Activated CD8-positive, alpha-beta T cell treated with anti-CD3 and anti-CD28 coated beads, Interleukin-2, amount 10 ng/mL, durations not matched to agents 7 days and 5 days (primary cell): ENCODE measurements at regions of chr2 and their contacts with region 1.

Region 1: DNA sequence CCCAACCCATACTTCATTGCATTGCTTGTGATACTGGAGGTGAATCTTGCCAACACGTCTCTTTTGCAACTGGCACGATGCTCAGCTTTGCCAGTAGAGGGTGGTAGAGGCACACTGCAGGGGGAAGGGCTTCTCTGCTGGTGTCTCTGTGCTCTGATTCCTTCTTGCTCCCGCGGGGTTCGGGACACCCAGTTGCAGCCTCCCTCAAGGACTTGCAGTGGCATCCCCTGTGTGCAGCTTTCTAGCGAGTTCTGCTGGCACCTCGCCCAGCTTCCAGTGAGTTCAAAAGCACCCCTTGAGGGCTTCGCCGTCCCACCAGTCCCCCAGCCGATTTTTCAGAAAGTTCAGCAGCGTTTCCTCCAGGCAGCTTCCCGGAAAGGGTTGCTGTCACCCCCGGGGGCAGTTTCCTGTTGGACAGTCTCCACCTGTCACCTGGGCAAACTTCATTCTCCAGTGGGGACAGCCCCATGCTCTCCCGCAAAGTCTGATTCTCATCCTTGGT is 35.3 kb upstream of the EN1 start:
- DNase-seq: peak; percentile 71
- ATAC-seq: peak; percentile 75
- H3K4me3 Mint-ChIP-seq: peak overlapping the region; percentile 73
- H3K27ac Mint-ChIP-seq: peak overlapping the region; percentile 46
- H3K4me1 Mint-ChIP-seq: peaks cover 14% of the 10 kb centered on the region
- H3K27me3 Mint-ChIP-seq: peaks cover 6% of the 10 kb centered on the region

Region 2: DNA sequence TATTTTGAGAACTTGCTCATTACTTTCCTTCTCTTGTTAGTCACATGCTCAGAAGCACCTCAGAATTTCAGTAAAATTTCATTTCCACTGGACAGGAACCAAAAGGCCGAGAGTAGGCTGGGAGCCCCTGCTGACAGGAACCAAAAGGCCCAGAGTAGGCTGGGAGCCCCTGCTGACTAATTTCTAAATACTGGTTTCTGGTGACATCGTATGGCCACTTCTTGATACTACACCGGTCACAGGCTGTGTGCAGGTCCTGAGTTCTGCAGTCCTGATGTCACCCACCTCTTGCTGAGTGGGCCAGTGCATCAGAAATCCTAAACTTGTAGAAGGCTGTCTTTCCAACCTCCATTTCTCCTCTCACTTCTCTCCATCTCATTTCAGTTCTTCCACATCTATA is 17.7 kb before region 1 on chr2:
- CTCF ChIA-PET with region 1: interaction called, 23 read pairs
- POLR2A ChIA-PET with region 1: no interaction called
- DNase-seq: peak; percentile 36
- ATAC-seq: peak; percentile 81
- H3K4me3 Mint-ChIP-seq: no peak overlapping the region
- H3K27ac Mint-ChIP-seq: no peak overlapping the region
- H3K4me1 Mint-ChIP-seq: no peaks in the 10 kb centered on the region
- H3K27me3 Mint-ChIP-seq: peaks cover 29% of the 10 kb centered on the region

Region 3: DNA sequence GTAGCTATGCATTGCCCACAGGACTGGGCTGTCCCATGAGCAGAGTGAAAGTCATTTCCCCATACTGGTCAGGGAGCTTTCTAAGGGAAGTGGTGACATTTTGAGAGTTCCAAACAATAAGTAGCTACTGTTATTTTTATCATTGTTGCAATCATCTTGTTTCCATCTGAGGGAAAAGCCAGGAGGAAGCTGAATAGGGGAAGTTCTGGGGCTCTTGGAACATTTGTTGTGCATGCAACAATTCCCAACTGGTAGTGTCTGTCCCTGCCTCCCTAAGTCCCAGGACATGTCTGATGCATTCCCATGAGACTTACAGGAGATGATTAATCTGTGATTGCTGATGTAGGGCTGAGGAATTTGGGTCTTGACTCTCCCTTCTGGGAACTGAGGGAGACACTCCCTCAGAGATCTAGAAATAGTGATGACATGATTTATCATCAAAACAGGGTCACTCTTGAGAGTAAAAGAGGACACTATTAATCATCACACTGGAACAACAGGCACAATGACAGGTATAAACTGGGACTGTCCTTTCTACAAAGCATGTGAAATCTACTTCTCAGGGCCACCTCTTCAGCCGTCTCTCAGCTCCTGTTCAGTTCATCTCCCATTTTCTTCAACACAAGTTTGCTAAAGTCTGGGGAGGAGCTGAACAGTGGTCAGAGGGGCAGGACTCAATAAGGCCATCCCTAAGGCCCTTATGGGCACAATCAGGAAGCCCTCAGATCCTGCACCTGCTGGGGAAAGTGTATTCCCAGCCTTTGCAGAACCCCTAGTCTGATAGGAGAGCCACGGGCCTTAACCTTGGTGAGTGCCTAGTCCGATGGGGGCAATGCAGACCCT is 31.3 kb after region 1 on chr2:
- CTCF ChIA-PET with region 1: interaction called, 12 read pairs
- POLR2A ChIA-PET with region 1: no interaction called
- DNase-seq: no peak
- ATAC-seq: no peak
- H3K4me3 Mint-ChIP-seq: no peak overlapping the region
- H3K27ac Mint-ChIP-seq: no peak overlapping the region
- H3K4me1 Mint-ChIP-seq: no peaks in the 10 kb centered on the region
- H3K27me3 Mint-ChIP-seq: no peaks in the 10 kb centered on the region

Region 4: DNA sequence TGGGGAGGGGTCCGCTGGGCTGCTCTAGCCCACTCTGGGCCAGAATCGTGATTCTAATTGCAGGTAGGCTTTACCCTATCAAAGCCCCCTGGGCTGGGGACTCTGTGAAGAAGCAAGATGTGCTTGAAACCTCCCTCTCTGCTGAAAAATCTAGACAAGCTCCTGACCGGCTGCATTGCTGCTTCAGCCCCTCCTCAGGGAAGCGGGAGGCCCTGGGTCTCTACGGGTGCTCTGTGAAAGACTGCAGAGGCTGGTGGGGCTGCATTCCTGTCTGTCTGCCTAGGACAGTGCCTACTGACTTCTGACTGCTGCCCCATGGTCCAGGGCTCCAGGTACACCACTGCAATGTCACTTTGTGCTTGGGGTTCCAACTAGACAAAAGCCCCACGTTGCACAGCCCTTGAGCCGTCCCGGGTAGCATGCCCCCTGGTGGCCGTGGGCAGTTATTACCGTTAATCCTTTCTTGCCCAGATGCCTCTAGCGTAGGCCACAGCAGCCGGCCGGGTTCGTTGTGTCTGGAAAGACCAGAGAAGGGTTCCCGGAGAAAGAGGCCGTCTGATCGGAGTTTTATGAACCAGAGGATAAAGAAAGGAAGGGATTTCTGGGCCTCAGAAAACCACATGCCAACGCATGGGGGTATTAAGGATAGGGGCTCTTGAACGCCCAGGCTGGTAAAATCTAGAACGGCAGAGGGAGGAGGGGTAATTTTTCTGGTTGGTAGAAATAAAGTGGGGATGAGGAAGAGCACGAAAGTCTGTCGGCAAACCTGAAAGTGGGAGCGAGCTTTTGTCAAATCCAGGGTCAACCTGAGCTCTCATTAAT is 291.7 kb after region 1 on chr2:
- CTCF ChIA-PET with region 1: interaction called, 46 read pairs
- POLR2A ChIA-PET with region 1: no interaction called
- DNase-seq: peak; percentile 63
- ATAC-seq: peak; percentile 68
- H3K4me3 Mint-ChIP-seq: no peak overlapping the region
- H3K27ac Mint-ChIP-seq: no peak overlapping the region
- H3K4me1 Mint-ChIP-seq: no peaks in the 10 kb centered on the region
- H3K27me3 Mint-ChIP-seq: no peaks in the 10 kb centered on the region

Region 5: DNA sequence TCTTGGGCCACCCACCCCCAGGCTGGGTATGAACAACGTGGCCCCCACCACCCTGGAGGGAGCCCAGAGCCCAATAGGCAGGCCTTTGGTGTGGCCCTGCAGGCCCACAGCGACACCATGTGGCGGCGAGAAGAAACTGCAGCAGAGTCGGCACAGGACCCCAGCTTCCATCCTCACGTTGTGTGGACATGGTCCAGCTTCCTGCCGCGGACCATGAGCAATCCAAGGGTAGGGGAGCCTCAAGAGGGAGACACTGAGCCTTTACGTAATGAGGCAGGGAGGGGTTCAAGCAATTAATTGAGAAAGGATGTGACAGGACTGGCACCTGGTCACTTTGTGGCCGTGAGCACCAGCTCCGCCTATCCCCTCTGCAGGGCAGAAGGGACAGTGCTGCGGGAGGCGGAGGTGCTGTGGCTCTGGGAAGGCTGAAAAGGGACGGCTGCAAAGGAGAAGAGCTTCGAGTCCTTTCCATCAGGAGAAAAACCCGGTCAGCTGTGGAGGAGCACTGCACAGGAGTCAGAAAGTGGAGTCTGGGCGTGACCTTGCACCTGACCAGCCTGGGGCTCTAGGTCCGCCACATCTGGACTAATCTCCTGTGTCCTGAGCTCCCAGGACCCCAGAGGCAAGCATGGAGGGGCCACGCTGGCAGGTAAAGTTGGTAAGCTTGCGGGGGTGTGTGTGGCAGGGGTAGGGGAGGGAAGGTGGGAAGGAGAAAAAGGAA is 593.7 kb after region 1 on chr2:
- CTCF ChIA-PET with region 1: interaction called, 16 read pairs
- POLR2A ChIA-PET with region 1: no interaction called
- DNase-seq: peak; percentile 46
- ATAC-seq: peak; percentile 83
- H3K4me3 Mint-ChIP-seq: no peak overlapping the region
- H3K27ac Mint-ChIP-seq: no peak overlapping the region
- H3K4me1 Mint-ChIP-seq: no peaks in the 10 kb centered on the region
- H3K27me3 Mint-ChIP-seq: no peaks in the 10 kb centered on the region